Left ventricle myocardium superior (tissue), 1 donor: ENCODE measurements at regions of chr10 and their contacts with region 1.

Region 1: GRCh38 chr10:132354356-132355094 is 22.5 kb downstream of the LRRC27 start:
- DNase-seq: peak; percentile 27
- ATAC-seq: no peak

Region 2: DNA sequence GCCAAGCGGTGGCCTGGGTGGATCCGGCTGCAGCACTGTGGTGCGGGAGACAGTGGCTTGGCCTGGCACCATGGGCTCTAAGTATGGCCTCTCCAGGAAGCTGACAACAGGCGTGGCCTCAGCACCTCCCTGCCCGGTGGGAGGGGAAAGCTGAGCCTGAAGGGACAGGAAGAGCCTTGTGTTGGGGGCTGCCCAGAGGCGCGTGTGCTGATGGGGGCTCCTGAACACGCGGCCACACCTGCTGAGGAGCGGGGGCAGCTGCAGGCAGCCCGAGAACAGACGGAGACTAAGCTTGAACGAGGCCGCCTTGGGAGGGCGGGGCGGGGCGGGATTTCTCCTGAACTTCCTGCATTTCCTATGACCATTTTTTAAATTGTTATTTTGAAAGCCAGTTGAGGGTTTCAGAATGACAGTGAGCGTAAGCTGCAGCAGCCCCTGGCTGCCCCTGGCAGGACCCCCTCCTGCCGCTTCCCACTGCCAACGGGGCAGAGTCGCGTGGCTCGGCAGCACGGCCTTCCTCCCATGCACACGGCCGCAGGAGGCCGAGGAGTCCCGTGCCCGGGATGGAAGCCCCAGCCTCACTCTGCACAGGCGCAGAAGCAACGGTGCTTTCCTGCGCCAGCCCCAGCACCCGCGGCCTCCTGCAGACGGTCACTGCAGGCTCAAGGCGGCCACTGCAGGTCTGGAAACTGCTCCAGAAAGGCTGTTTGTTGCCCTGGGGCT is 124.5 kb before region 1 on chr10:
- intact Hi-C with region 1: loop called (anchors 5 kb)
- DNase-seq: no peak
- ATAC-seq: peak; percentile 51

Region 3: GRCh38 chr10:132257271-132257670 is 97.3 kb before region 1 on chr10:
- intact Hi-C with region 1: no loop called
- DNase-seq: no peak
- ATAC-seq: no peak

Region 4: DNA sequence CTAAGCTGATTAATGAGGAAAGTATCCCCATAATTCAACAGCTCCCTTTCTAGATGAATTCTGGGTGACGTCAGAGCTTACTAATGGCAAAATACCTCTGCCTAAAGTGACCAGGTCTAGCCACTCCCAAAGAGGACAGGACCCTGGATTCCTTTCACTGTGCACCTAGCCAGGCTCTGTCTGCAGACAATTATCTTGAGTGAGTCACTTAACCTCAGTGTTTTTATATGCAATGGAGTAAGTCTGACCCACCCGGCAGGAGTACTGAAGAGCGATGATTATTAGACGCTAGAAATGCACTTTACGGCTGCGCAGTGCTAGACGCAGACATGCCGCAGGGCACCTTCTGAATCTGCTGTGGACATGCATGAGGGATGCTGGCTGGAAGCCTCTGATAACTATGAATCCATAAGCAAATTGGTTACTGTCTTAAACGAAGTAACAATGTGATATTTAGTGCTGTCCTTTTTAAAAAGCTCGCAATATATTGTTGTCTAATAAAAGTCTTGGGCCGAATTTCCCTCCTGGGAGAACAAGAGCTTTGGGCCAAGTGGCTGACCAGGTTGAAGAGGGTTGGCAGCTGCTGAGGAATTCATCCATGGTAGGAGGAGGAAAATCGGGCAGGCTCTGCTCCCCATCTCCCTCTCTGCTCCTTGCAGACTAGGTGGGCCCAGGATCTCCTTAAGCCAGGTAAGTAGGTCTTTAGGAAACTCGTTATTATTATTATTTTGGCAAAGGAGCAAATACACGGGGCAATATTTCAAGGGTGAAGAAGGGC is 178.4 kb after region 1 on chr10:
- intact Hi-C with region 1: no loop called
- DNase-seq: no peak
- ATAC-seq: no peak